Activated CD8-positive, alpha-beta T cell treated with anti-CD3 and anti-CD28 coated beads for 36 hours (primary cell): ENCODE measurements at regions of chr2 and their contacts with region 1.

Region 1: GRCh38 chr2:44479122-44479887 is 117.6 kb downstream of the CAMKMT start:
- DNase-seq: peak; percentile 46
- ATAC-seq: peak; percentile 100
- H3K4me3 Mint-ChIP-seq: no peak overlapping the region
- H3K27ac Mint-ChIP-seq: no peak overlapping the region
- H3K4me1 Mint-ChIP-seq: peaks cover 8% of the 10 kb centered on the region
- H3K27me3 Mint-ChIP-seq: no peaks in the 10 kb centered on the region
- CTCF ChIP-seq: peak; percentile 100

Region 2: DNA sequence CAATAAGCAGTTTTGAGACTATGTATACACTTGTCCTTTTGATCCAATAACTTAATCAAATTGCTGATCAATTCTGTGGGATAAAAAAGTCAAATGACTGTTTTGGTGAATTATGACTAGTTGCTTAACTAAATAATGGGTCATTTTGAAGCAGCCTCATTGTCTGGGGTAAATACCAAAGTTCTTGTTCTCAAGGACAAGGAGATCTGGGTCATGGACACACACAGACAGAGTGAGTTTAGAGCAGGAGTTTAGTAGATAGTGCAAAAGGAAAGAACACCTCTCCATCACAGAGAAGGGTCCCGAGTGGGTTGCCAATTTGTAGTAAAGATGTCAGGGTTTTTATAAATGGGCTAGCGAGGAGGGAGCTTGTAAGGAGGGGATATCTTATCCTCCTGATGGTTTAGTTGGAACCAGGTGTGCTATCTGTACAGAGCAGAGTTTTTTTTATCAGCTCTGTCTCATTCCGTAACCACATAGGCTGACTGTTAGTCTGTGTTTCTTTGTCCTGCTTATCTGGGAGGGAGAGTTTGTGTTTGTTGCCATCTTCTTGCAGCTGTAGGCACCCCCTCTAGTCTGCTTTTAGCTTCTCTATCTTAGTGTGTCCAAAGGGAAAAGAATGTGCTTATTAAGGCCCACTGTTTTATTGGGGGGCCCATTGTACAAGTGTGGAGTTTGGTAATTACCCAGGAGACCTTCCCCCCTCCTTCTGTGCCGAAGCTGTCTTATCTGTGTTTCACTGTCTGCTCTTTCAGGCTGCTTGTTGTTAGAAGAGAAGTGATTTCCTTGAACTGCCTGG is 754.4 kb before region 1 on chr2:
- CTCF ChIA-PET with region 1: no interaction called
- POLR2A ChIA-PET with region 1: no interaction called
- intact Hi-C with region 1: no loop called
- DNase-seq: no peak
- ATAC-seq: no peak
- H3K4me3 Mint-ChIP-seq: no peak overlapping the region
- H3K27ac Mint-ChIP-seq: no peak overlapping the region
- H3K4me1 Mint-ChIP-seq: no peaks in the 10 kb centered on the region
- H3K27me3 Mint-ChIP-seq: peaks cover 3% of the 10 kb centered on the region
- CTCF ChIP-seq: no peak

Region 3: GRCh38 chr2:44361330-44362206 is 117.7 kb before region 1 on chr2 and contains the starts of genes CAMKMT and PREPL:
- CTCF ChIA-PET with region 1: interaction called, 13 read pairs
- POLR2A ChIA-PET with region 1: no interaction called
- intact Hi-C with region 1: no loop called
- DNase-seq: peak; percentile 98
- ATAC-seq: peak; percentile 92
- H3K4me3 Mint-ChIP-seq: peak within 1 kb of the TSS; percentile 89
- H3K27ac Mint-ChIP-seq: peak within 1 kb of the TSS; percentile 100
- H3K4me1 Mint-ChIP-seq: peaks cover 50% of the 10 kb centered on the region
- H3K27me3 Mint-ChIP-seq: no peaks in the 10 kb centered on the region
- CTCF ChIP-seq: no peak
- total RNA-seq, gene CAMKMT: 12.1 to 14.1 TPM
- total RNA-seq, gene PREPL: 25.0 to 25.2 TPM

Region 4: DNA sequence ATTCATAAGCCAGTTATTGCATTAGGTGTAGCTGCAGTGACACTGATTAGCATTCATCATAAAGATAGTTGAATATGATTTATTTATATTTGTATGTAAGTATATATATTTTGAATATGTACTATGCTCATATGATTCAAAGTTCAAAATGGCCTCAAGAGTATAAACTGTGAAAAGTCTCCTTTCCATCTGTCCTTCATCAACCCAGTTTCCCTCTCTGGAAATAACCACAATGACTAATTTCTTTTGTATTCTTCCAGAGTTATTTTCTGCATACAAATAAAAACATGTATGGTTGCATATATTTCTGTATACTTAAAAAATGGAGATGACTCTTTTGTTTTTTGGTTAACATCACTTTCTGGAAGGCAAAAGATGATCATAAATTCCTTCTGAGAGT is 22.4 kb before region 1 on chr2:
- CTCF ChIA-PET with region 1: interaction called, 24 read pairs
- POLR2A ChIA-PET with region 1: no interaction called
- intact Hi-C with region 1: no loop called
- DNase-seq: no peak
- ATAC-seq: no peak
- H3K4me3 Mint-ChIP-seq: no peak overlapping the region
- H3K27ac Mint-ChIP-seq: no peak overlapping the region
- H3K4me1 Mint-ChIP-seq: no peaks in the 10 kb centered on the region
- H3K27me3 Mint-ChIP-seq: no peaks in the 10 kb centered on the region
- CTCF ChIP-seq: no peak

Region 5: DNA sequence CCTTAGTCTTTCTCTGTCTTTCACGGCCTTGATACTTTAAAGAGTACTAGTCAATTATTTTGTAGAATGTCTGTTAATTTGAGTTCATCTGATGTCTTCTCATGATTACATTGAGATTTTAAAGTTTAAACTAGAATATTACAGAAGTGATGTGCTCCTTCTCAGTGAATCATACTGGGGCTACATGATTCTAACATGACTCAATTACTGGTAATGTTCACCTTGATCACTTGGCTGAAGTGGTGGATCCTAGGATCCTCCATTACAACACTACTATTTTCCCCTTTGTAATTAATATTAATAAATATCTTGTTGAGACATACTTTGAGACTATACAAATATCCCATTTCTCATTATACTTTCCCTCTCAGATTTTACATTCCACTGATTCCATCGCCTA is 30.9 kb after region 1 on chr2:
- CTCF ChIA-PET with region 1: interaction called, 15 read pairs
- POLR2A ChIA-PET with region 1: no interaction called
- intact Hi-C with region 1: no loop called
- DNase-seq: no peak
- ATAC-seq: no peak
- H3K4me3 Mint-ChIP-seq: no peak overlapping the region
- H3K27ac Mint-ChIP-seq: no peak overlapping the region
- H3K4me1 Mint-ChIP-seq: peaks cover 4% of the 10 kb centered on the region
- H3K27me3 Mint-ChIP-seq: no peaks in the 10 kb centered on the region
- CTCF ChIP-seq: no peak

Region 6: DNA sequence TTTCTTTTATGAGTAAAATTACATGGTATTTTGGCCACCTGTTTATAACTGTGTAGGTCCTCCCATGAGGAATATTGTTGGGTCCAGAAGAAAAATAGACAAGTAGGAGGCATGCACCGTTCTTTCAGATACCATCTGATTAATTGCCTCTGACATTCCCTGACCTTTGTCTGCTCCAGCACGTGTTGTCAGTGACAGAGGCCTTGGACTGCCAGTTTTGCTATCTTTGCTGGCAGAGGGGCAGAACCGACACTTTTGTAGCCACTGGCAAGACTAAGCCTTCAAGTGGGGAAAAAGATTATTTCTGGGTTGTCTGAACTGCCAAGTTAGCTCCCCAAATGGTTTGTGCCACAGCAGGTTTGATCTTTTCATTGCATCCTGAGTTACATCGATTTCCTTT is 159.3 kb after region 1 on chr2:
- CTCF ChIA-PET with region 1: interaction called, 11 read pairs
- POLR2A ChIA-PET with region 1: no interaction called
- intact Hi-C with region 1: no loop called
- DNase-seq: no peak
- ATAC-seq: no peak
- H3K4me3 Mint-ChIP-seq: no peak overlapping the region
- H3K27ac Mint-ChIP-seq: no peak overlapping the region
- H3K4me1 Mint-ChIP-seq: peaks cover 6% of the 10 kb centered on the region
- H3K27me3 Mint-ChIP-seq: no peaks in the 10 kb centered on the region
- CTCF ChIP-seq: no peak

Region 7: GRCh38 chr2:44877417-44877816 is 398.1 kb after region 1 on chr2:
- CTCF ChIA-PET with region 1: interaction called, 11 read pairs
- POLR2A ChIA-PET with region 1: no interaction called
- intact Hi-C with region 1: no loop called
- DNase-seq: no peak
- ATAC-seq: no peak
- H3K4me3 Mint-ChIP-seq: no peak overlapping the region
- H3K27ac Mint-ChIP-seq: no peak overlapping the region
- H3K4me1 Mint-ChIP-seq: no peaks in the 10 kb centered on the region
- H3K27me3 Mint-ChIP-seq: peaks cover 5% of the 10 kb centered on the region
- CTCF ChIP-seq: no peak